ENCODE measurements at regions of chr1 and their contacts with region 1.

Region 1: GRCh38 chr1:218377143-218377660 is 32.1 kb downstream of the TGFB2 start:
- DNase-seq: peak; percentile 87 to 96
- H3K4me3 ChIP-seq: peak overlapping the region; percentile 36
- H3K27ac ChIP-seq: peak overlapping the region; percentile 91
- H3K4me1 ChIP-seq: peaks cover 80% of the 10 kb centered on the region
- H3K27me3 ChIP-seq: no peaks in the 10 kb centered on the region
- CTCF ChIP-seq: no peak

Region 2: DNA sequence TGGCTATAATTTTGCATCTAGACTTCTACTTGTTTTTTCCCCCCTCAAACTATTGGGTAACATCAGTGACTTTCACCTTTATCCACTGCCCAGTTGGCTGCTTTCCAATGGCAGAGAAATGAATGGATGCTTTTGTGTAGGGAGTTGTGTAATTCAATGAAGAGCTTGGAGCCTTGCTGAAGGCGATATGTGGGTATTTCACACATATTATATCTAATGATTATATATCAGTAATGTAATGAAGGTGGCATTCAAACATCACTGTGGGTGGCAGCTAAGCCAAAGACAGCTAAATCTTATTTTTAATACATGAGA is 49.1 kb after region 1 on chr1:
- CTCF ChIA-PET with region 1: no interaction called
- POLR2A ChIA-PET with region 1: no interaction called
- intact Hi-C with region 1: loop called (anchors 5 kb)
- DNase-seq: peak; percentile 43 to 90
- H3K4me3 ChIP-seq: peak overlapping the region; percentile 25; the same call in 1 of the 2 replicates
- H3K27ac ChIP-seq: peak overlapping the region; percentile 79
- H3K4me1 ChIP-seq: peaks cover 41% of the 10 kb centered on the region
- H3K27me3 ChIP-seq: no peaks in the 10 kb centered on the region
- CTCF ChIP-seq: no peak

Region 3: DNA sequence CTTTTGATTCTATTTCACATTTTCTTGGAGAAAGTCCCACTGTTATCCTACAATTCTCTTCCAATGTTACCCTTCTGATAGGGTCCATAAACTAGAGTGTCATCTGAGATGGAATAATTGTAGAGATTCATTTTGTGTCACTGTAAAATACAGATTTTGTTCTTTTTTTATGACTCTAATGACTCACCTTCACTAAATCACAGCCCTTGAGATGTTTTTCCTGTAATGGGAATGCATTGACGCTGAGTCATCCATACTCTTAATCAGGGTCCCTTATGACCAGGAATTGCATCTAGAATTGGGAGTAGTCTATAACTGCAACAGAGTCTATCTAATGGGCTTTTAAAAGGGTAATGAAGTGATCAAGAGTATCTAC is 283.5 kb after region 1 on chr1:
- CTCF ChIA-PET with region 1: no interaction called
- POLR2A ChIA-PET with region 1: no interaction called
- intact Hi-C with region 1: loop called (anchors 2 kb)
- DNase-seq: peak; percentile 23 to 84
- H3K4me3 ChIP-seq: no peak overlapping the region
- H3K27ac ChIP-seq: peak overlapping the region; percentile 81
- H3K4me1 ChIP-seq: peaks cover 44% of the 10 kb centered on the region
- H3K27me3 ChIP-seq: no peaks in the 10 kb centered on the region
- CTCF ChIP-seq: no peak

Measured in PC-9 (cell line).